H1 (cell line): ENCODE measurements at regions of chr17 and their contacts with region 1.

Region 1: GRCh38 chr17:79874329-79874981 is 35.2 kb upstream of the CBX4 start:
- DNase-seq: no peak
- H3K4me3 ChIP-seq: no peak overlapping the region
- H3K27ac ChIP-seq: no peak overlapping the region
- H3K4me1 ChIP-seq: no peaks in the 10 kb centered on the region; a peak in 3 of 7 replicates
- H3K27me3 ChIP-seq: no peaks in the 10 kb centered on the region
- CTCF ChIP-seq: peak in 2 of 3 experiments; percentile 49 to 60; a peak in 2 of 4 replicates
- EP300 ChIP-seq: no peak
- POLR2A ChIP-seq: no peak
- RAD21 ChIP-seq: 0 out of 4 replicates have a peak, but pooled peaks of 1 of the 2 experiments have one; percentile 10

Region 2: GRCh38 chr17:79844869-79845600 is 29.4 kb before region 1 on chr17:
- CTCF ChIA-PET with region 1: interaction called, 11 read pairs
- POLR2A ChIA-PET with region 1: interaction called, 3 read pairs
- DNase-seq: peak in 1 of 2 experiments; percentile 88
- H3K4me3 ChIP-seq: peak overlapping the region in 3 of 4 experiments; percentile 20 to 60 (median 23); a peak in 4 of 8 replicates
- H3K27ac ChIP-seq: no peak overlapping the region
- H3K4me1 ChIP-seq: peaks cover 0 to 23% (median 15%) of the 10 kb centered on the region in 4 experiments; a peak in 5 of 7 replicates
- H3K27me3 ChIP-seq: peaks cover 57 to 64% (median 63%) of the 10 kb centered on the region in 4 experiments
- CTCF ChIP-seq: peak; percentile 67 to 88 (median 84)
- EP300 ChIP-seq: 0 out of 3 replicates have a peak, but pooled peaks of 1 of the 2 experiments have one; percentile 15
- POLR2A ChIP-seq: no peak
- RAD21 ChIP-seq: peak; percentile 55 to 77

Region 3: DNA sequence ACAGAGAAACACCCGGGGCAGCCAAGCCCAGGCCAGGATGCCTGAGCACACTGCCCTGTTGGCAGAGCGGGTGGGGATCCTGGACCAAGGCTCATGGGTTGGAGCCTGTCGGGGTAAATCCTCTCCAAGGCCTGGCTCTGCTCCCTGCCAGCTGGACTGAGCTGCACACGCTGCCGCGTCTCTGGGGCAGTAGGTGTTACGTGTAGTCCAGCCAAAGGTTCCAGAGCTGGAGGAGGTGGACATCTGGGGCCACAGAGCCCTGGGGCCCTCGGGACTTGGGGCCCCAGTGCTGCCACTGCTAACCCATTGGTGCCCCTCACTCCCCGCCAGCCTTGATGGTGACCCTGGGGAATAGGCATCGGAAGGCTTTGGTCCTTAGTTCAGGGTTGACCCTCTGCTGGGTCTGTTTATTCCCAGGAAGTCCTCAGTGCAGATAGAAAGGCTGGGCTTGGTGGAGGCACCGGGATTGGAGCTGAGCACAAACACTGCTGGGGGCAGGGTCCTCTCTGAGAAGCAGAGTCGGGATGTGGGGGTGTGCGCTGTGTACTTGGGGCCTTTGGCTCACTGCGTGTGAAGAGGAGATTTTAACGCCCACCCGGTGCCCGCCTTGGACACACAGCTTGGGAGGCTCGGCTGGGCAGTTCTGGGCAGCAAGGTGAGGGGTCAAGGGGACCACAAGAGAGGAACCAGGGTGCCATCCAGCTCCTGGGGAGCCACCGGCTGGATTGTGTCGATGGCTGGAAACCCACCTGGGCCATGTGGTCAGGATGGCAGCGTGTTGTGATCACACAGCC is 18.9 kb before region 1 on chr17:
- CTCF ChIA-PET with region 1: interaction called, 11 read pairs
- POLR2A ChIA-PET with region 1: interaction called, 4 read pairs
- DNase-seq: no peak
- H3K4me3 ChIP-seq: no peak overlapping the region
- H3K27ac ChIP-seq: no peak overlapping the region
- H3K4me1 ChIP-seq: peaks cover 0 to under 1% (median 0%) of the 10 kb centered on the region in 4 experiments; a peak in 2 of 7 replicates
- H3K27me3 ChIP-seq: 0 out of 7 replicates have a peak, but pooled peaks cover 0 to 2% (median 0%) of the 10 kb centered on the region in 4 experiments
- CTCF ChIP-seq: no peak
- EP300 ChIP-seq: no peak
- POLR2A ChIP-seq: no peak
- RAD21 ChIP-seq: no peak

Region 4: DNA sequence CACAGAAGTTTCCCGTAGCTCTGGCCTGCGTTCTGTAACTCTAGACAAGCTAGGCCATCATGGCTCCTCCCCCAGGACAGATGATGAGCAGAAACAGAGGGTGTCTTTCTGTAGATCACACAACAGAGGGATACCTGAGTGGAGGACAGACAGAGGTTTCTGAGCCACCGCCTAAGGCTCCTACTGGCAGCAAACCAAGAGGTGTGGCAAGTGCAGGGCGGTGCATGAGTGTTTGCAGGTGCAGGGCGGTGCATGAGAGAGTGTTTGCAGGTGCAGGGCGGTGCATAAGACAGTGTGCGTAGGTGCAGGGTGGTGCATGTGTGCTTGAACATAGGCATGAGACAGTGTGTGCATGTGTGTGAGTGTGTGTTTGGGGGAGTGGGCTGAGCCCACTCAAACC is 18.0 kb after region 1 on chr17:
- CTCF ChIA-PET with region 1: interaction called, 64 read pairs
- POLR2A ChIA-PET with region 1: interaction called, 3 read pairs
- DNase-seq: no peak
- H3K4me3 ChIP-seq: no peak overlapping the region
- H3K27ac ChIP-seq: no peak overlapping the region
- H3K4me1 ChIP-seq: no peaks in the 10 kb centered on the region
- H3K27me3 ChIP-seq: peaks cover 0 to 3% (median 0%) of the 10 kb centered on the region in 4 experiments; a peak in 1 of 7 replicates
- CTCF ChIP-seq: no peak
- EP300 ChIP-seq: no peak
- POLR2A ChIP-seq: no peak
- RAD21 ChIP-seq: no peak